ENCODE measurements at regions of chr3 and their contacts with region 1.

Region 1: GRCh38 chr3:100047455-100048141 is 66.7 kb downstream of the FILIP1L start:
- DNase-seq: peak; percentile 73
- H3K27ac ChIP-seq: peak overlapping the region; percentile 57
- CTCF ChIP-seq: no peak

Region 2: DNA sequence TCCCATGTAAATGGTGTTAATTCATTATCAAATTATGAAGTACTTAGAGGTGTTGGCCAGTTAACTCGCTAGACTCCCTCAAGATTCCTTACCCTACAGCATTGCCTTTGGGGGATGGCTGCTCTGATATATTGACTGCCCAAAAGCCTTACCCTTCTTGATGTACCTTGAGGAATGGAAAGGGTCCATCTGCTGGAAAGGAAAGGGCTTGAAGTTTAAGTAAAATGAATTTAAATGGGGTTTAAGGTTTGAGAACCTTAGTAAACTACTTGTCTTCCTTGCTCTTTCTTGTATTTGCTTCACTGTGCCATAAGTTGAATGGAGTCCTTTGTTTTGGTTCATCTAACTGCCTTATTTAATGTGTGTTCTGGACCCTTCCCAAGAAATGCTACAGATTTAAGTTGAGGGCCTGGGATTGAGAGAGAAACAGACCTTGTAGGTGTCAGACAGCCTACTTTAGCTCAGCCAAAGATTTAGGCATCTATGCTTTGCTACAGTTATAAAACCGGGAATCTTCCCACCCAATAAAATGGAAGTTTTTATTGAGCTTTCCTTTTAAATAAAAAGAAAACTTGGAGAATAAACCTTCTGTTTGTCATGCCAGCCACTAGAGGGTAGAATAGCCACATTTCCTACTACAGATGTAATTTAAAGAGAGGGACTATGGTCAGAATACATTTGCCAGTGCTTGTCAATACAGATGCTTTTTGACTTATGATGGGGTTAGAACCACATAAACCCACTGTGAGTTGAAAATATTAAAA is 204.6 kb before region 1 on chr3:
- CTCF ChIA-PET with region 1: interaction called, 12 read pairs
- POLR2A ChIA-PET with region 1: no interaction called
- DNase-seq: peak; percentile 48
- H3K27ac ChIP-seq: no peak overlapping the region
- CTCF ChIP-seq: peak; percentile 72

Region 3: GRCh38 chr3:100400780-100401673 is 353.4 kb after region 1 on chr3 and contains the starts of genes LNP1 and TOMM70:
- CTCF ChIA-PET with region 1: no interaction called
- POLR2A ChIA-PET with region 1: no interaction called
- DNase-seq: peak; percentile 91
- H3K27ac ChIP-seq: peak within 1 kb of the TSS; percentile 91
- CTCF ChIP-seq: no peak

Measured in RWPE1 (cell line).